ENCODE measurements at regions of chr15 and their contacts with region 1.

Region 1: GRCh38 chr15:48112242-48112641 is 8.5 kb upstream of the SLC24A5 start:
- DNase-seq: peak; percentile 90
- H3K4me3 ChIP-seq: no peak overlapping the region
- H3K27ac ChIP-seq: no peak overlapping the region
- H3K4me1 ChIP-seq: no peaks in the 10 kb centered on the region
- H3K27me3 ChIP-seq: peaks cover 0 to 5% (median 0%) of the 10 kb centered on the region in 4 donors
- CTCF ChIP-seq: peak; percentile 19 to 60 (median 34)
- EP300 ChIP-seq: no peak
- POLR2A ChIP-seq: no peak

Region 2: GRCh38 chr15:48250640-48251076 is 138.4 kb after region 1 on chr15:
- intact Hi-C with region 1: loop called (anchors 5 kb)
- DNase-seq: no peak
- H3K4me3 ChIP-seq: no peak overlapping the region
- H3K27ac ChIP-seq: no peak overlapping the region
- H3K4me1 ChIP-seq: no peaks in the 10 kb centered on the region
- H3K27me3 ChIP-seq: no peaks in the 10 kb centered on the region
- CTCF ChIP-seq: peak; percentile 54 to 69 (median 67)
- EP300 ChIP-seq: no peak
- POLR2A ChIP-seq: no peak

Region 3: GRCh38 chr15:48285329-48286214 is 173.3 kb after region 1 on chr15:
- intact Hi-C with region 1: loop called (anchors 10 kb)
- DNase-seq: no peak
- H3K4me3 ChIP-seq: peak overlapping the region; percentile 16 to 45 (median 30)
- H3K27ac ChIP-seq: peak overlapping the region in 1 of 4 donors; percentile 32
- H3K4me1 ChIP-seq: peaks cover 12 to 37% (median 34%) of the 10 kb centered on the region in 4 donors
- H3K27me3 ChIP-seq: no peaks in the 10 kb centered on the region
- CTCF ChIP-seq: peak; percentile 68 to 78 (median 76)
- EP300 ChIP-seq: no peak
- POLR2A ChIP-seq: no peak

Measured in esophagus muscularis mucosa (tissue), 4 donors.